ENCODE measurements at regions of chr16 and their contacts with region 1.

Region 1: GRCh38 chr16:31196324-31197088 is 6.1 kb downstream of the PYCARD start:
- DNase-seq: no peak
- ATAC-seq: no peak
- H3K4me3 Mint-ChIP-seq: no peak overlapping the region
- H3K27ac Mint-ChIP-seq: peak overlapping the region; percentile 2
- H3K4me1 Mint-ChIP-seq: peaks cover 60% of the 10 kb centered on the region
- H3K27me3 Mint-ChIP-seq: no peaks in the 10 kb centered on the region
- CTCF ChIP-seq: no peak

Region 2: GRCh38 chr16:31215287-31216162 is 19.0 kb after region 1 on chr16:
- CTCF ChIA-PET with region 1: interaction called, 4 read pairs
- POLR2A ChIA-PET with region 1: interaction called, 48 read pairs
- intact Hi-C with region 1: no loop called
- DNase-seq: peak; percentile 52
- ATAC-seq: peak; percentile 66
- H3K4me3 Mint-ChIP-seq: peak overlapping the region; percentile 42
- H3K27ac Mint-ChIP-seq: no peak overlapping the region
- H3K4me1 Mint-ChIP-seq: peaks cover 22% of the 10 kb centered on the region
- H3K27me3 Mint-ChIP-seq: peaks cover 41% of the 10 kb centered on the region
- CTCF ChIP-seq: no peak

Measured in activated CD8-positive, alpha-beta T cell treated with anti-CD3 and anti-CD28 coated beads for 36 hours (primary cell).